Sigmoid colon (tissue), 7 donors: ENCODE measurements at regions of chr16 and their contacts with region 1.

Region 1: DNA sequence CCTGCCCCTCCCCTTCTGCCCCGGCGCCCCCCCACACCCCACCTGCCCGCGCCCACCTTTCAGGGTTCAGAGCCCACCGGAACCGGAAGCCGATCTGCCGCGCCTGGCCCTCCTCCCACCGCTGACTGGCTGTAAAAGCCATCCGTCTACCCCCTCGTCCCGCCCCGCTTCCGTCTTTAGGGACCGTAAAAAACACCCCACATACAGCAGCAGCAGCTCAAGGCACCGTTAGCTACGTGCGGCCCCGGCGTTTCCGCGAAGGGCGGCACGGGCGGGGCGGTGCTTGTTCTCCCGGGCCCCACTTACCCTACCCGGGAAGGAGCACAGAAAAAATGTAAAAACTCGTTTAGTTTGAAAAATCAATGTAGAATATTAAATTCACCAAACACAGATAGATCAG is at the start of gene MRPL28:
- DNase-seq: peak; percentile 98
- H3K4me3 ChIP-seq: peak within 1 kb of the TSS; percentile 44 to 59 (median 55)
- H3K27ac ChIP-seq: peak within 1 kb of the TSS; percentile 76 to 79 (median 76)
- H3K4me1 ChIP-seq: peaks cover 3 to 20% (median 18%) of the 10 kb centered on the region in 4 donors
- H3K27me3 ChIP-seq: no peaks in the 10 kb centered on the region
- CTCF ChIP-seq: no peak
- EP300 ChIP-seq: no peak
- POLR2A ChIP-seq: no peak
- total RNA-seq, gene MRPL28: 49.6 to 77.4 (median 62.0) TPM

Region 2: GRCh38 chr16:324451-325334 is 45.8 kb before region 1 on chr16:
- intact Hi-C with region 1: loop called (anchors 5 kb)
- DNase-seq: no peak
- H3K4me3 ChIP-seq: peak overlapping the region in 1 of 4 donors; percentile 12
- H3K27ac ChIP-seq: no peak overlapping the region
- H3K4me1 ChIP-seq: peaks cover 0 to 14% (median 11%) of the 10 kb centered on the region in 4 donors
- H3K27me3 ChIP-seq: no peaks in the 10 kb centered on the region
- CTCF ChIP-seq: no peak
- EP300 ChIP-seq: no peak
- POLR2A ChIP-seq: no peak